Aorta (tissue), 5 donors: ENCODE measurements at regions of chr2 and their contacts with region 1.

Region 1: DNA sequence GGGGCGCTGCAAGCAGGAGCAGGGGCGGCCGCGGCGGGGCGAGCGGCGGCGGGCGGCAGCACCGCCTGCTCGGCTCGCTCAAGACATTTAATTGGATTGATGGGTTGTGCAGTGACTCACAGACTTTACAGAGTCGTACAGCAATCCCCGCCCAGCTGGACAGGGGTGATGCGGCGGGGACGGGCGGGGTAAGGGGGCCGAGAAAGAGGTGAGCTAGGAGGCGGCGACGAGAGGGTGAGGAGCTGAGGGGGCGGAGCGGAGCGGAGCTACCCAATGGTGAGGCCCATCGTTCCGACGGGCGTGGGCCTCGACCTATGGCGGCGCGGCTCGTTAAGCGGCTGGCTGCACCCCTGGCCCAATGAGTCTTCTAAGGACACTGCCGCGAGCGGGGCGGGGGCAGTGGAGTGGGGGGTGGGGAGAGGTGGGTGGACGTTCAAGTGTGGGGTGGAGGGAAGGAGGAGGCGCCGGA is 97.1 kb upstream of the SERTAD2 start:
- DNase-seq: peak; percentile 99 to 100
- ATAC-seq: peak; percentile 96
- H3K4me3 ChIP-seq: peak overlapping the region; percentile 60 to 87
- H3K27ac ChIP-seq: peak overlapping the region in 1 of 2 donors; percentile 94
- H3K4me1 ChIP-seq: no peaks in the 10 kb centered on the region
- H3K27me3 ChIP-seq: no peaks in the 10 kb centered on the region

Region 2: GRCh38 chr2:64595397-64596160 is 155.3 kb before region 1 on chr2:
- intact Hi-C with region 1: loop called in 1 of 2 experiments (anchors 5 kb)
- DNase-seq: no peak
- ATAC-seq: no peak
- H3K4me3 ChIP-seq: no peak overlapping the region
- H3K27ac ChIP-seq: no peak overlapping the region
- H3K4me1 ChIP-seq: peaks cover 0 to 5% of the 10 kb centered on the region in 2 donors
- H3K27me3 ChIP-seq: no peaks in the 10 kb centered on the region

Region 3: DNA sequence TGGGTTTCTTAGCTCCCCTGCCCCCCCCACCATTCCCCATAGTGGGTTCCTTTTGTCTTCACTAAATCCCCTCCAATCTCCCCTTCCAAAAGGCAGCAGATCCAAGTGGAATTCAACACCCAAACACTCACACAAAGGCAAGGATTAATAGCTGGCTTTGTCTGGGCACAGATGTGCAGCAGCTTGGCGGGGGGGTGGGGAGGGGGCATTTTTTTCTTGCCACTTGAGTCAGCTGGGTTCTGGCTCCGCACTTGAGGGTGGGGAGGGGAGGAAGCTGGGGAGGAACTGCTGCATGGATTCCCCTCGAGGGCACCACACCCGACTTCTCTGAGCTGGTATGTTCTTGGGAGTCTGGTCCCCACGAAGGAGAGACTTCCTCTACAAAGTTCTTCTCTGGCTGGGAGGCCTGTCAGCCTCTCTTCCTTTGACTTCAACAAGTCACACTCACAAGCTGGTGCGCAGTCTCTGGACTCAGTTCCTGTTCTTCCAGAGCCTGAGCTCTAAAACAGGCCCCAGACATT is 133.2 kb before region 1 on chr2:
- intact Hi-C with region 1: no loop called
- DNase-seq: no peak
- ATAC-seq: no peak
- H3K4me3 ChIP-seq: no peak overlapping the region
- H3K27ac ChIP-seq: no peak overlapping the region
- H3K4me1 ChIP-seq: no peaks in the 10 kb centered on the region
- H3K27me3 ChIP-seq: no peaks in the 10 kb centered on the region

Region 4: DNA sequence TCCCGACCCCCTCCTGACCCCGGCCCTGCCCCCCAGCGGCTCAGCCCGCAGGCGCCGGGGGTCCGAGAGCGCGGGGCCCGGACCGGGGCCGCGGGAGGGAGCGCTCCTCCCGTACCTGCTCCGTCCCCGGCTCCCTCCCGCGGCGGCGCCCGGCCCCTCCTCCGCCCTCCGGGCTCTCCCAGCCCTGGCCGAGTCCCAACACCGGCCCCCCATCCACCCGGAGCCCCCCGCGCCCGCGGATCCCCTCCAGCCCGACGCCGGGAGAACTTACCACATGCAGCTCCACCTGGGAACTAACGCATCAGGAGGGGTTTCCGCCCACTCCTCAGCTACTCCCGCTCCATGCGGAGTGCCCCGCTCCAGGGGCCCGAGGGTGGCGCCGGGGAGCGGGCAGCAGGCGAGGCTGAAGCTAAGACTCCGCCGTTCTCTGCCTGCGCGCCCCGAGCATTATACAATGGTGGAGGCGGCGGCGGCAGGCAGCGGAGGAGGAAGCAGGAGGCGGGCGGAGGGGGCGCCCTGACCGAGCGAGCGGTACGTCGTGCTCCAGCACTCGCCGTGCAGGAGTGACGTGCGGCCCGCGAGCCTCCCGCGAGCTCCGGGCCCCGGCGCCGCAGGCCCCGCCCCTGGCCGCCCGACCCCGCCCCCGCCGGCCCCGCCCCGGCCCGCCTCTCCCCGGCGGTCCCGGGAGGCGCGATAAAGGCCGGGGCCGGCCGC is 97.3 kb before region 1 on chr2 and contains the start of gene SERTAD2:
- intact Hi-C with region 1: loop called (anchors 2 to 5 kb)
- DNase-seq: peak; percentile 94 to 95
- ATAC-seq: peak; percentile 95
- H3K4me3 ChIP-seq: peak within 1 kb of the TSS; percentile 79 to 97
- H3K27ac ChIP-seq: peak within 1 kb of the TSS; percentile 95 to 97
- H3K4me1 ChIP-seq: no peaks in the 10 kb centered on the region
- H3K27me3 ChIP-seq: no peaks in the 10 kb centered on the region
- total RNA-seq, gene SERTAD2: 23.5 to 27.4 TPM

Region 5: GRCh38 chr2:64695721-64696261 is 55.1 kb before region 1 on chr2:
- intact Hi-C with region 1: no loop called
- DNase-seq: no peak
- ATAC-seq: no peak
- H3K4me3 ChIP-seq: no peak overlapping the region
- H3K27ac ChIP-seq: no peak overlapping the region
- H3K4me1 ChIP-seq: no peaks in the 10 kb centered on the region
- H3K27me3 ChIP-seq: no peaks in the 10 kb centered on the region

Region 6: DNA sequence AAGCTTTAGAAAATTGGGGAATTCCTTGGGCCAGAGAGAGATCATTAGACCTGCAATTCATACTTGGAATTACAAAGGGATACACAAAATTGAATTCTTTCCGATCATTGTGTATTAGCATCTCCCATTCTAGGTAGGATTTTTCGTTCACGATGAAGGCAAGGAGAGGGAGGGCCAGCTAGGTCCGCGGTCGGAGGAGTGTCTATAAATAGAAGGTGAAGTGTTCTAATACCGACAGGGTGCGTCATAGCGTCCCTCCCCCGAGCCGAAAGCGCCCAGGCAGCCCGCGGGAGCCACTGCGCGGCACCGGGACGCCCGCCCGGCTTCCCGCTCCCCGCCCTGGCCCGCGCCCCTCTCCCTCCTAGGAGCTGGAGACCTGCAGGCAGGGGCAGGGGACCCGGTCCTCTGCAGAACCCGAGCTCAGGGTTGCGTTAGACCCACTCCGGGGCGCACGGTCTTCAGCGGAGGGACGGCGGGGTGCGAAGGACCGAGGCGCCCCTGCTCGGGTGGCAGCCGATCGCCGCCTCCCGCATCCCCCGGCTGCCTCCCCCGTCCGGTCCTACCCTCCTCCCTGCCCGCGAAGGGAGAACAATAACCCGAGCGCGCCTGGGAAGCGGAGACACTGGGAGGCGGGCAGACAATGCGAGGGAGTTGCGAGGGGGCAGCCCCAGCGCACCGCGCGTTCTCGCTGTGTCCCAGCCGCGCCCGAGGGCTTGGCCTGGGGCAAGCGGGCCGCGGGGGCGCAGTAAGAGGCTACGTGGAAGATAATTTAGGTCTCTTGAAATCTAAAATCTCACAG is 17.0 kb after region 1 on chr2:
- intact Hi-C with region 1: loop called in 1 of 2 experiments (anchors 1 kb)
- DNase-seq: peak; percentile 94 to 95
- ATAC-seq: peak; percentile 97
- H3K4me3 ChIP-seq: peak overlapping the region; percentile 50 to 95
- H3K27ac ChIP-seq: peak overlapping the region; percentile 87 to 93
- H3K4me1 ChIP-seq: no peaks in the 10 kb centered on the region
- H3K27me3 ChIP-seq: no peaks in the 10 kb centered on the region

Region 7: DNA sequence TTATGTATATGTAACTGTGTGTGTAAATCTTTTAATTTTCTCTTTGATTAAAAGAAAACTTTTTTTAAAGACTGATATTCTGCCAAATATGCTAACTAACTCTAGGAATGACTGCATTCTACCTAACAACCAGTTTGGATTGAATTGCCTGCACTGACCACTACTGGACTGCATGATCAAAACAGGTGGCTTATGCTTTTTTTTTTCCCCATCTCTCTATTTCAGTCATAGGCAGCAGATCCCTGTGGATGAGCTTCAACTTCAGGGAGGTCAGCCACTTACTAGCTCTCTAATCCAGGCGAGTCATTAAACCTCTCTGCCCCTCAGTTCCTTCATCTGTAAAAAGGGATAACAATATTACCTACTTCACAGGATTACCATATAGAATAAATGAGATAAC is 41.5 kb after region 1 on chr2:
- intact Hi-C with region 1: no loop called
- DNase-seq: no peak
- ATAC-seq: peak; percentile 44
- H3K4me3 ChIP-seq: no peak overlapping the region
- H3K27ac ChIP-seq: no peak overlapping the region
- H3K4me1 ChIP-seq: no peaks in the 10 kb centered on the region
- H3K27me3 ChIP-seq: no peaks in the 10 kb centered on the region